Mucosa of descending colon (tissue), 3 donors: ENCODE measurements at regions of chr14 and their contacts with region 1.

Region 1: DNA sequence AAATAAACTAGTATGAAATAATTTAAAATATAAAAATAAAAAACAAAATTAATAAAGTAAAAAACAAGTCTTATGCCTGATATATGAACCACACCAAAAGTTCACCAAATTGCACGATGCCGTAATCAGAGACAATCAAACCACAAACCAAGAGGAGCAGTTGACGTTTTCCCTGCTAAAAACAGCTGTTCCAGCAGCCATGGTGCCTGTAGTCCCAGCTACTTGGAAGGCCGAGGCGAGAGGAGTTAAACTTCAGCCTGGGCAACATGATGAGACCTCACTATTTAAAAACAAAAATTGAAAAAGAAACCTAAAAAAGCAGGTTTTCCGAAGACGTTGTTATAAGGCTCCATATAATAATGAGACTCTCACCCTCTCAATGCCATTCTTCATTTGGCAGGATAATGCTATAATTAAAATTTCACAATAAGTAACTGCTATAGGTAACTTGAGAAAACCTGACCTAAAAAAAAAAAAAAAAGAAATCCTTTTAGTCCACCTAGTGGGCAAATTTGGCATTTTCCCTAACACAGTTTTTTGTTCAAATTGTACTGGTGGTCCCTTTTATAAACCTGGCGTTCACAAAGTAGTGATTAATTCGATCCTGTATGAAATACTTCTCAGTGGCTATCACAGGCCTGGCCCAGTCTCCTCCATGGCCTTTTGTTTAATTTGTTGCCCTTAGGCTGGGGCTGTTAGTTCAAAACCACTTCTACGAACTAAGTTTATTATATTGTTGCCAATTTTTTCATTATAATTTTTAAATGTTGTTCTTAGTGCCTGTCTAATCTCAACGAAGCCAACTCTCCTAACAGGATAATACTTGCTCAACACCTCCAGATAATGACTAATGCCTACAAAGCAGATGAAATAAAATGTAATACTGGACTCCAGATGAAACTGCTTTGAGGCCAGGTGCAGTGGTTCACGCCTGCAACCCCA is 62.1 kb downstream of the TNFAIP2 start:
- DNase-seq: no peak
- ATAC-seq: no peak
- H3K4me3 ChIP-seq: no peak overlapping the region
- H3K4me1 ChIP-seq: peaks cover 23% of the 10 kb centered on the region
- CTCF ChIP-seq: no peak

Region 2: DNA sequence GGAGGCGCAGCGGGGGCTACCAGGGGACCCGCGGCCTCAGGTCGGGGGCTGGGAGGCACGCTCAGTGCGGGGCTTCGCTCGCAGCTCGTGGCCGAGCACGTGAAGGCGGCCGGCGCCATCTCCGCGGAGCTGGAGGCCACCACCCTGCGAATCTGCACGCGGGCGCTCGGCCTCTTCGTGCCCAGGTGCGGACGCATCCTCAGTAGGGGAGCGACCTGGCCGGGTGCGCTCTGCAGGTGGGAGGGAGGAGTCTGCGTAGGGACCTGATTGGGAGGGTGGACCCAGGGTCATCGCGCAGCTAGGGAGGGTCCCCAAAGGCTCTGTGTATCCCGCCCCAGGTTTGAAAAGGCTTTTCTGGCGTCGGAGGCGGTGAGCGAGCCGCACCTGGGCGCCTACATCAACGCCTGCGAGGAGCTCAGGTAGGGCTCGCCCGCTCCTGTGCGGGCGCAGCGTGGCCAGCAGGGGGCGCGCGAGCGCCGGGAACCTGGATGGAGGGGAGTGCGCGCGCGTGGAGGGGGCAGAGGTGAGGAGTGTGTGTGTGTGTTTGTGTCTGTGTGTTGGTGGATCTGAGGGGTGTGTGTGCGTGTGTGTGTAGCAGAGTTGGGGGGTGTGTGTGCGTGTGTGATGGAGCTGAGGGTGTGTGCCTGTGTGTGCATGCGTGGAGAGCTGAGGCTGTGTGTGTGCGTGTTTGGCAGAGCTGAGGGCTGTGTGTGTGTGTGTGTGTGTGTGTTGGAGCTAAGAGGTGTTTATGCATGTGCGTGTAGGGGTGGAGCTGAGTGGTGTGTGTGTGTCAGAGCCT is 80.5 kb before region 1 on chr14:
- intact Hi-C with region 1: loop called in 1 of 2 experiments (anchors 10 kb)
- DNase-seq: peak in 2 of 3 donors; percentile 83 to 87
- ATAC-seq: peak; percentile 83
- H3K4me3 ChIP-seq: no peak overlapping the region
- H3K4me1 ChIP-seq: peaks cover 18% of the 10 kb centered on the region
- CTCF ChIP-seq: peak; percentile 97

Region 3: DNA sequence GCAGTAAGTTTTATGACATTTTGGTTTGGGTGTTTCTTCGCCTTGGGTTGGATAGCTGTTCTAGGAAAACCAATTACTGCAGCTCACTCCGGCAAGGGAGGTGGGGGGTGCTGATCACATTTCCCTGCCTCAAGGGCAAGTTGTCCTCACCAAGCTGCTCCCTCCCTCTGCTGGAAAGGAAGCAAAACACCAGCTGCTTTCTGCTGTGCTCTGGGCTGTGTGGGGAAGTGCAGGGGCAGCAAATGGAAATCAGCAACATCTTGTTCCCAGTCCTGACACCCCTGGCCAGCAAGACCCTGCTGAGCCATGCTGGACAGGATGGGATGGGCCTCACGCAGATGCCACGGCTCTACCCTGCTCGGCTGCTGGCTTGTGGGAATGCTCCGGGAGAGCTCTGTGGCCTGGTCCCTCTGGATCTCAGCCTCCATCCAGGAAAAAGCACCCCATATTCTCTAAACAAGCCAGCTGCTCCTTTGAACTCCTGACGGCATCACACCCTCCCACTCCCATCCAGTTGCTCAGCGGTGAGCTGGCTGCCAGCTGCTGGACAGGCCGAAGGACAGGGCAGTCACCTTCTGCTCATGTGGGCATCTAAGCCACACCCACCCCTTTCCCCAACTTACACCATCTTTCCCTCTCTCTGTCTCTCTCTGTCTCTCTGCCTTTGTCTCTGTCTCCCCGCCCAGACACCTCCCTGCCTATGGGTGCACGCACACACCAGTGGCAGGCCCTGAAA is 96.3 kb after region 1 on chr14:
- intact Hi-C with region 1: loop called in 1 of 2 experiments (anchors 10 kb)
- DNase-seq: peak in 1 of 3 donors; percentile 53
- ATAC-seq: peak; percentile 78
- H3K4me3 ChIP-seq: no peak overlapping the region
- H3K4me1 ChIP-seq: no peaks in the 10 kb centered on the region
- CTCF ChIP-seq: no peak